Calu3 (cell line): ENCODE measurements at regions of chr18 and their contacts with region 1.

Region 1: DNA sequence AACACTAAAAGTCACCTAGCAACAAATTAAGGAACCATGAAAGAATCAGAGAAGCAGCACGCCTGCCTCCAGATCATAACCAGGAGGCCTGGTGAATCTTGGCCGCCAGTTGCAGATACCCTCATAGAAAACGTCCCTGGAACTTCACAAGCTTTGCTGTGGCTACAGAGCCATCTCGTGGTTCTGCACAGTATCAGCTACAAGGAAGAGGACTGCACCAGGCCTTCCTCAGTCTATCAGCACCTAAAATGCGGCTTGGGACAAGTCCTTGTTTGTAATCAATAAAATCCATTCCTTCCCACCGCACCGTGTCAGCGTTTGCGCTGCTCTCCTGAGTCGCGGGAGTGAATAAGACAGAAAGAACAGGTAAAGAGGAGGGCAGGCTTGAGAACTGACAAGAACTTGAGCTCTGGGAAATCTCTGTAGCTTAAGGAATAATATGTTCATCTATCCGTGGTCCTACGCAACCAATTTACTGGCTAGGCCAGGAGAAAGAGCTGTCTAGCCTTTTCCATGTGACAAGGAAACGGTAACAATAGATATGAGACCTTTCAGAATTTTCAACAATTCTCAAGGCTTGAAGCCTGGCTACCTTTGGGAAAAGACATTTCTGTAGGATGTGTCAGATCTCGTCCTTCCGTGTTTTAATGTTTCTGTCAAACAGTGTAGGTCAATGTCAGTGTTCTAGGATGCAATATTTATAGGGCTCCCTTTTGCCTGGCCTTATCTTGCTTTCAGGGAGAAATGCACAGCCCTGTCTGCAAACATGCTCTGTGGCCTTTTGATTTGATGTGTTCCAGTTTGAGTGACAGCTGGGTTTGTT is 128.5 kb upstream of the RAB12 start:
- DNase-seq: peak; percentile 50
- H3K4me3 Mint-ChIP-seq: no peak overlapping the region
- H3K27ac Mint-ChIP-seq: no peak overlapping the region
- H3K4me1 Mint-ChIP-seq: no peaks in the 10 kb centered on the region
- H3K27me3 Mint-ChIP-seq: peaks cover 87% of the 10 kb centered on the region
- CTCF ChIP-seq: peak; percentile 32

Region 2: DNA sequence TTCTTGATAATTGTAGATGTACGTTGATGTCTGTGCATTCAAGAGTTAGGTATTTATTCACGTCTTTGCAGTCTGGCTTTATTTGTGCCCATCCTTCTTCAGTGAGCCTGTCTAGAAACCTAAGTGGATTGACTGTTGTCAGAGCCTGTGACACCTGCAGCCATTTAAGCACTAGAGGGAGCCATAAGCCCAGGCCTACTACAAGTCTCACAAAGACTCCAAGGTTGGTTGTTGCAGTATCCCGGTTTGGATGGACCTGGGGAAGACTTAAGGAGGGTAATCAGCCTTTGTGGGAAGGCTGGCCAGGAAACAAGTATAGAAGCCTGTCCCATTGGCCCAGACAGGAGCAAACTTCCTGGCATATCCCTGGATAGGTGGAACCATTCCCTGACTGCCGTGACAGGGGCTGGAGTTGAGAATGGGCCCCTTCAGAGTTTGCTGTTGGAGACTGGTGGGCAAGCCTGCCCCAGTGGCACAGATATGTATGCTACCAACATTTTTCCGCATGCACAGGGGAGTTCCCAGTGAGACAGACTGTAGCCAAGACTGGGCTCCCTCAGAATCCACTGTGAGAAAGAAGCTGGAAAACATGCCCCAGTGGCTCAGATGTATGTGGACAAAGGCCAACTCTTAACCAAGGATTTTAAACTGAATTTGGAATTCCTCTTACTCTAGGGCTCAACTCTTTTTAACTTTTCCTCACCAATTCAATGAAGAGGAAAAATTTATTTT is 1259.1 kb before region 1 on chr18:
- CTCF ChIA-PET with region 1: interaction called, 3 read pairs
- intact Hi-C with region 1: loop called (anchors 5 kb)
- DNase-seq: peak; percentile 60
- H3K4me3 Mint-ChIP-seq: no peak overlapping the region
- H3K27ac Mint-ChIP-seq: no peak overlapping the region
- H3K4me1 Mint-ChIP-seq: no peaks in the 10 kb centered on the region
- H3K27me3 Mint-ChIP-seq: peaks cover 31% of the 10 kb centered on the region
- CTCF ChIP-seq: peak; percentile 79